Mammary epithelial cell (primary cell): ENCODE measurements at regions of chr4 and their contacts with region 1.

Region 1: DNA sequence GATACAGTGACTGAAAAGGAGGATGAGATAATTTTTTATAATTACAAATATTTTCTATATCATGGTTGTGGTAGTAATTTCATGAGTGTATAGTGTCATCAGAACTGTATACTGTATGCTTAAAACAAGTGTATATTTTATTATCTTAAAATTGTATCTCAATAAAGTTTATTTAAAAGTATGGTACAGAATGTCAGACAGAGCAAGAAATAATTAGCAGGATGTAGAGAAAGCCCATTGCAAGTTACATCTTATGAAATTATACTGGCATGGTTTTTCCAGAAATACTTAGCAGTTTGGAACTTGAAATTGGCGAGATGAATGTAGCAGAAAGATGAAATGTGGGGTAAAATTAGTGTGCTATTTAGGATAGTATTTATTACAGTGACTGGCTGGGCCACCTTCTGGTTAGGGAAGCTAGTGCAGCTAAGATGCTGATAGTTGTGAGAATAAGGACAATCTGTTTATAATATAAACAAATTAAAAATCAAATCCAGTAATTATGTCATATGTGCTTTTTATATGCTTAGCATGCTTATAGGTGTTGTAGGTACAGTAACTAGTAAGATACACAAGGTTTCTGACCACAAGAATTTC is 74.7 kb downstream of the IL15 start:
- DNase-seq: peak; percentile 8
- H3K4me3 ChIP-seq: no peak overlapping the region
- H3K27ac ChIP-seq: no peak overlapping the region
- H3K4me1 ChIP-seq: peaks cover 15% of the 10 kb centered on the region
- H3K27me3 ChIP-seq: no peaks in the 10 kb centered on the region
- CTCF ChIP-seq: peak; percentile 68 to 80

Region 2: GRCh38 chr4:141174457-141174856 is 536.7 kb before region 1 on chr4:
- CTCF ChIA-PET with region 1: no interaction called
- dilution Hi-C with region 1: no loop called
- in situ Hi-C with region 1: no loop called
- intact Hi-C with region 1: no loop called
- DNase-seq: no peak
- H3K4me3 ChIP-seq: no peak overlapping the region
- H3K27ac ChIP-seq: no peak overlapping the region
- H3K4me1 ChIP-seq: no peaks in the 10 kb centered on the region
- H3K27me3 ChIP-seq: peaks cover 3% of the 10 kb centered on the region
- CTCF ChIP-seq: no peak

Region 3: GRCh38 chr4:141346144-141346543 is 365.0 kb before region 1 on chr4:
- CTCF ChIA-PET with region 1: no interaction called
- dilution Hi-C with region 1: no loop called
- in situ Hi-C with region 1: no loop called
- intact Hi-C with region 1: loop called (anchors 1 kb)
- DNase-seq: peak; percentile 39
- H3K4me3 ChIP-seq: no peak overlapping the region
- H3K27ac ChIP-seq: no peak overlapping the region
- H3K4me1 ChIP-seq: peaks cover 13% of the 10 kb centered on the region
- H3K27me3 ChIP-seq: no peaks in the 10 kb centered on the region
- CTCF ChIP-seq: peak; percentile 58 to 64

Region 4: GRCh38 chr4:141375855-141376254 is 335.3 kb before region 1 on chr4:
- CTCF ChIA-PET with region 1: no interaction called
- dilution Hi-C with region 1: no loop called
- in situ Hi-C with region 1: no loop called
- intact Hi-C with region 1: loop called (anchors 1 kb)
- DNase-seq: peak; percentile 83
- H3K4me3 ChIP-seq: no peak overlapping the region
- H3K27ac ChIP-seq: no peak overlapping the region
- H3K4me1 ChIP-seq: peaks cover 4% of the 10 kb centered on the region
- H3K27me3 ChIP-seq: no peaks in the 10 kb centered on the region
- CTCF ChIP-seq: peak; percentile 89 to 99